MCF 10A (cell line): ENCODE measurements at regions of chr14 and their contacts with region 1.

Region 1: GRCh38 chr14:92973261-92973797 is 50.4 kb downstream of the CHGA start:
- DNase-seq: peak; percentile 81
- H3K4me3 Mint-ChIP-seq: no peak overlapping the region
- H3K27ac Mint-ChIP-seq: peak overlapping the region; percentile 92
- H3K4me1 Mint-ChIP-seq: peaks cover 19% of the 10 kb centered on the region
- H3K27me3 Mint-ChIP-seq: no peaks in the 10 kb centered on the region
- CTCF ChIP-seq: peak; percentile 84

Region 2: GRCh38 chr14:92914087-92914656 is 59.2 kb before region 1 on chr14:
- CTCF ChIA-PET with region 1: no interaction called
- POLR2A ChIA-PET with region 1: no interaction called
- intact Hi-C with region 1: no loop called
- DNase-seq: peak; percentile 56
- H3K4me3 Mint-ChIP-seq: no peak overlapping the region
- H3K27ac Mint-ChIP-seq: no peak overlapping the region
- H3K4me1 Mint-ChIP-seq: no peaks in the 10 kb centered on the region
- H3K27me3 Mint-ChIP-seq: peaks cover 44% of the 10 kb centered on the region
- CTCF ChIP-seq: no peak

Region 3: DNA sequence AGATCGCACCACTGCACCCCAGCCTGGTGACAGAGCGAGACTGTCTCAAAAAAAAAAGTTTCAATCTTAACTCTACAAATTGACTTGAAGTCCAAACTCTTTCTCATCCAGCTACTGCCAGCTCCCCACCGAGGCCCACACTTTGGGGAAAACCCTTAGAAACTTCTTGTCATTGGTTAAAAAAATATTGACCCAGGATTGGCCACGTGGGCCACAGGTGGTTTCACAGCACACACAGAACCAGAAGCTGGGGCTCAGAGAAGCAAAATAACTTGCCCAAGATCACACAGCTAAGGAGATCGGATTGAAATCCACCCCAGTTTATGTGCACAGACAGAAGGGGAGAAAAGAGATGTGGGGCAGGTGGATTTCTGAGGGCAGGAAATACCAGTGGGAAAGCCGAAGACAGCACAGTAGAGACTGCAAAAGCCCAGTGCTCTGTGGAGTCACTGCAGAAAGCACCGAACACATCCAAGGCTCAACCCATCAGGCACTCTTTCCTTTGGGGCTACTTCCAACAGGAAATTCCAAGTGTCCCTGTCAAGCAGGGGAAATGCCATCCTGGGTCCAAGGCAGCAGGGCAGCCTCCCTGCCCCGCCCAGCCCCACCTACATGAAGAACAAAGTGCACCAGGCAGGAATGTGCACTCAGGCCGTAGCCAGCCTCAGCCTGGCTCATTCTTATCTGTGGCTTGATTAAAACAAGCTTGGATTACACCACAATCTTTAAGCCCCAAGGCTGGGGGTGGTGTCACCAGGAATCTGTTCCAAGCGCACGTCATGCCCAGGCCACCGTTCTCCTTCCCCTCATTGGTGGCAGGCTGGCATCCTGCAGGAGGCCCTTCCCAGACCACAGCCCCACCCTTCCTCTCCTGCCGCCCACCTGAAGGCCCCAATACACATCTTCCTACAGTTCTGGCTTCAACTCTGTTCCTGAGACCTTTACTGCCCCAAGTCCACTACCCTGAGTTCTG is 69.9 kb after region 1 on chr14:
- CTCF ChIA-PET with region 1: interaction called, 3 read pairs
- POLR2A ChIA-PET with region 1: no interaction called
- intact Hi-C with region 1: loop called (anchors 5 kb)
- DNase-seq: peak; percentile 93
- H3K4me3 Mint-ChIP-seq: peak overlapping the region; percentile 60
- H3K27ac Mint-ChIP-seq: peak overlapping the region; percentile 96
- H3K4me1 Mint-ChIP-seq: peaks cover 66% of the 10 kb centered on the region
- H3K27me3 Mint-ChIP-seq: no peaks in the 10 kb centered on the region
- CTCF ChIP-seq: no peak

Region 4: DNA sequence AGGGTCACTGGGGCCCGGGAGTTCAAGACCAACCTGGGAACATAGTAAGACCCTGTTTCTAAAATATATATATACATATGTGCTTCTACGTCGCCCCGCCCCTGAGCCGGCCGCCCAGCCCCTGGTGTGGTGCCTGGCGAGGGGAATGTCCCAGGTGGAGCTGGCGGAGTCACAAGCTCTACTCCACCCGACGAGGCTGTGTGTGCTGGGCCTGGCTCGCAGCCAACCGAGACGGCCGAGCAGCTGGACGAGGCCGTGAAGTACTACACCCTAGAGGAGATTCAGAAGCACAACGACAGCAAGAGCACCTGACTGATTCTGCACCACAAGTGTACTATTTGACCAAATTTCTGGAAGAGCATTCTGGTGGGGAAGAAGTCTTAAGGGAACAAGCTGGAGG is 164.5 kb after region 1 on chr14:
- CTCF ChIA-PET with region 1: interaction called, 3 read pairs
- POLR2A ChIA-PET with region 1: no interaction called
- intact Hi-C with region 1: loop called (anchors 1 kb)
- DNase-seq: peak; percentile 58
- H3K4me3 Mint-ChIP-seq: no peak overlapping the region
- H3K27ac Mint-ChIP-seq: no peak overlapping the region
- H3K4me1 Mint-ChIP-seq: peaks cover 22% of the 10 kb centered on the region
- H3K27me3 Mint-ChIP-seq: no peaks in the 10 kb centered on the region
- CTCF ChIP-seq: no peak